ENCODE measurements at regions of chr12 and their contacts with region 1.

Region 1: DNA sequence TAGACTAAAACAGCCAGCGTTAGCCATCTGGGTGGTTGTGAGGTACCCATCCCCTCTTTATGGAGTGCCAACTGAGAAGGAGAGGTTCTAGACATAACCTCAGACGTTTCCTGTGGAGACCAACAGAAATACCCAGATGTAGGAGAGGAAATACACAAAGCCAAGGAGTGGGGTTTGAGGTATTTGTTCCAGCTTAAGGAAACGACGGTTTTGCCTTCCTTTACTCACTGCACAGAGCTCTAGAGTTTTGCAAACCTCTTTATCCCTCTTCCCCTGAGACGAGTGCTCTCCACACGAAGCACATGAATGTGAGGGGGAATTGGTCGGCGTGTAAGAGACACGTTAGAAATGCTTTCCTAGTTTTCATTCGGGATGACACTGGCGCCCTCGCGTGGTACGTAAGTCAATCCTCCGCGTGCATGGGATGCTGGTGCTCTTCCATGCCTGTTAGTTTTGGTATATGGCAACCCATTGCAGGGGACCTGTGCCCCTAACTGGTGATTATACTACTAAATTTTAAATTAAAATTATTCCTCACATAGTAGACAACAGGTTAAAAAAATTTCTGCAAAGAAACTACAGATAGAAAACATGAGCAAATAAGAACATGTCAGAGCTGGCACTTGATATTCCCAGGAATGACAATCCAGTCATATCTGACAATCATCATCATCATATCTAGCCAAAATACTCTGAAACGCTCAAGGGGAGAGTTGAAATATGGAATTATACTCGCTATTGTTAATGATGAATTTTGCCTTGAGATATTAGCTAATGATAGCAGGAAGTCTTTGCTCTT is 121.7 kb downstream of the PPM1H start:
- DNase-seq: no peak
- H3K4me3 ChIP-seq: no peak overlapping the region
- H3K27me3 ChIP-seq: no peaks in the 10 kb centered on the region
- CTCF ChIP-seq: peak; percentile 88

Region 2: GRCh38 chr12:62673028-62673815 is 140.0 kb before region 1 on chr12:
- CTCF ChIA-PET with region 1: no interaction called
- POLR2A ChIA-PET with region 1: no interaction called
- DNase-seq: no peak
- H3K4me3 ChIP-seq: no peak overlapping the region
- H3K27me3 ChIP-seq: no peaks in the 10 kb centered on the region
- CTCF ChIP-seq: no peak

Region 3: DNA sequence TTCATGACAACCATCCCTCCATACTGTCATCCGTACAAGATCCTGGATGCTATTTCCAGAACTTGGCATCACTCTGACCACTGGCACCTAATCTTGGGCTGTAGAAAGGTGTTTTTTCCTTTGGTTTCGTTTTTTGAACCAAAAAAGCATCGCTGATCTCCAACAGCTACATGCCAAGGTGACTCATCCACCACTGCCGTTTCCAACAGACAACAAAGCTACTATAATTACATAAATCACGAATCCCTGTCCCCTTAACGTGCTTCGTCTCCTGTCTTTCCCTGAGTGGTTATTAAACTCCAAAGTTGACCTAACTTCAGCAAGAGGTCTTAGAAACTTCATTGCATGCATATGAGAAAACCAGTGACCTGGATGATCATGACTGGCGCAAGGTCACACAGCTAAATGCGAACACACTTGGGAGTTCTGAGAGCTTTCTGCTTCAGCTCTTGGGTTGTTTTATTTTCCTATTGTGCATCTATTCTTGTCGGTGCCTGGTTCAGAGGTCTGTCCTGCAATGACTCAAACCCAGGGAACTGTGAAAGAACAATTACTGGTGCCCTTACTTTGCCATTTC is 21.8 kb after region 1 on chr12:
- CTCF ChIA-PET with region 1: interaction called, 10 read pairs
- POLR2A ChIA-PET with region 1: no interaction called
- DNase-seq: no peak
- H3K4me3 ChIP-seq: no peak overlapping the region
- H3K27me3 ChIP-seq: no peaks in the 10 kb centered on the region
- CTCF ChIP-seq: no peak

Region 4: GRCh38 chr12:62934799-62935674 is 121.8 kb after region 1 on chr12 and contains the start of gene PPM1H:
- CTCF ChIA-PET with region 1: interaction called, 29 read pairs
- POLR2A ChIA-PET with region 1: no interaction called
- DNase-seq: no peak
- H3K4me3 ChIP-seq: peak within 1 kb of the TSS; percentile 78
- H3K27me3 ChIP-seq: no peaks in the 10 kb centered on the region
- CTCF ChIP-seq: peak; percentile 44
- polyA plus RNA-seq, gene PPM1H: 2.3 and 3.6 TPM in 2 replicates

Region 5: GRCh38 chr12:63068857-63069442 is 255.7 kb after region 1 on chr12:
- CTCF ChIA-PET with region 1: interaction called, 28 read pairs
- POLR2A ChIA-PET with region 1: no interaction called
- DNase-seq: no peak
- H3K4me3 ChIP-seq: no peak overlapping the region
- H3K27me3 ChIP-seq: no peaks in the 10 kb centered on the region
- CTCF ChIP-seq: peak; percentile 66

Measured in BJ (cell line).